Activated CD8-positive, alpha-beta T cell treated with anti-CD3 and anti-CD28 coated beads, Interleukin-2, amount 10 ng/mL, durations not matched to agents 7 days and 5 days (primary cell): ENCODE measurements at regions of chr12 and their contacts with region 1.

Region 1: DNA sequence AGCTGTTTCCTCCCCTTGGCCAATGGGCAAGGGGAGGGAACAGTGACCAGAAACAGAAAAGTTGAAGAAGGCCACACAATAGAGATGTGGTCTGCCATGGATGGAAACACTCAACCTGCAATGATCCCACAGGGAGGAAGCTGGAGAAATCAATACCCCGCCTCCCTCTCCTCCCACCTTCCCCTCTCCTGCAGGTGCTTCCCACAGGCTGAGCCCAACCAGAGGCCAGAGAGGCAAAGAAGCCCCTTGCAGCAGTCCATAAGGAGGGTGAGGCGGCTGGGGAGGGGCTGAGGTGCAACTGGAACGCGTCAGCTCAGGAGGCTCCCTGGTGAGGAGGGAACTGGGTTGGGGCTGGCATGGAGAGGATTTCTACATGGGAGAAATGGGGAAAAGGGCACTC is 84.0 kb downstream of the RNF34 start:
- DNase-seq: no peak
- ATAC-seq: no peak
- H3K4me3 Mint-ChIP-seq: no peak overlapping the region
- H3K27ac Mint-ChIP-seq: no peak overlapping the region
- H3K4me1 Mint-ChIP-seq: no peaks in the 10 kb centered on the region
- H3K27me3 Mint-ChIP-seq: no peaks in the 10 kb centered on the region

Region 2: GRCh38 chr12:121467115-121467793 is 16.7 kb before region 1 on chr12:
- CTCF ChIA-PET with region 1: interaction called, 20 read pairs
- POLR2A ChIA-PET with region 1: interaction called, 3 read pairs
- DNase-seq: peak; percentile 91
- ATAC-seq: peak; percentile 94
- H3K4me3 Mint-ChIP-seq: peak overlapping the region; percentile 60
- H3K27ac Mint-ChIP-seq: peak overlapping the region; percentile 52
- H3K4me1 Mint-ChIP-seq: peaks cover 28% of the 10 kb centered on the region
- H3K27me3 Mint-ChIP-seq: no peaks in the 10 kb centered on the region